Activated T-helper 1 cell treated with anti-CD3 and anti-CD28 coated beads, Interleukin-12 subunit alpha, Interleukin-12 subunit beta, Interleukin-2, Interleukin-4 antibody, amounts not matched to agents 30 ng/mL and 10 ng/mL and 1 ng/mL, durations not matched to agents 14 hours and 24 hours and 36 hours (primary cell): ENCODE measurements at regions of chr14 and their contacts with region 1.

Region 1: GRCh38 chr14:50116181-50116956 is at the start of gene VCPKMT:
- DNase-seq: peak; percentile 95
- H3K4me3 Mint-ChIP-seq: peak within 1 kb of the TSS; percentile 97
- H3K27ac Mint-ChIP-seq: peak within 1 kb of the TSS; percentile 98
- H3K4me1 Mint-ChIP-seq: peaks cover 33% of the 10 kb centered on the region
- H3K27me3 Mint-ChIP-seq: no peaks in the 10 kb centered on the region
- total RNA-seq, gene VCPKMT: 12.3 and 15.2 TPM in 2 replicates

Region 2: GRCh38 chr14:49598485-49599300 is 517.7 kb before region 1 on chr14 and contains the start of gene LRR1:
- intact Hi-C with region 1: loop called (anchors 5 kb)
- DNase-seq: peak; percentile 82
- H3K4me3 Mint-ChIP-seq: peak within 1 kb of the TSS; percentile 92
- H3K27ac Mint-ChIP-seq: peak within 1 kb of the TSS; percentile 95
- H3K4me1 Mint-ChIP-seq: peaks cover 44% of the 10 kb centered on the region
- H3K27me3 Mint-ChIP-seq: no peaks in the 10 kb centered on the region
- total RNA-seq, gene LRR1: 45.1 and 46.7 TPM in 2 replicates

Region 3: GRCh38 chr14:49692811-49693734 is 423.3 kb before region 1 on chr14 and contains the start of gene KLHDC1:
- intact Hi-C with region 1: loop called (anchors 5 kb)
- DNase-seq: peak; percentile 74
- H3K4me3 Mint-ChIP-seq: peak within 1 kb of the TSS; percentile 87
- H3K27ac Mint-ChIP-seq: peak within 1 kb of the TSS; percentile 94
- H3K4me1 Mint-ChIP-seq: peaks cover 19% of the 10 kb centered on the region
- H3K27me3 Mint-ChIP-seq: peaks cover 1% of the 10 kb centered on the region
- total RNA-seq, gene KLHDC1: 0.93 and 1.9 TPM in 2 replicates

Region 4: GRCh38 chr14:49786315-49787110 is 329.9 kb before region 1 on chr14:
- intact Hi-C with region 1: loop called (anchors 5 kb)
- DNase-seq: no peak
- H3K4me3 Mint-ChIP-seq: no peak overlapping the region
- H3K27ac Mint-ChIP-seq: no peak overlapping the region
- H3K4me1 Mint-ChIP-seq: no peaks in the 10 kb centered on the region
- H3K27me3 Mint-ChIP-seq: no peaks in the 10 kb centered on the region

Region 5: GRCh38 chr14:49862089-49862673 is 254.2 kb before region 1 on chr14:
- intact Hi-C with region 1: loop called (anchors 1 kb)
- DNase-seq: peak; percentile 81
- H3K4me3 Mint-ChIP-seq: no peak overlapping the region
- H3K27ac Mint-ChIP-seq: no peak overlapping the region
- H3K4me1 Mint-ChIP-seq: peaks cover 10% of the 10 kb centered on the region
- H3K27me3 Mint-ChIP-seq: peaks cover 6% of the 10 kb centered on the region

Region 6: GRCh38 chr14:50260511-50260910 is 144.1 kb after region 1 on chr14:
- intact Hi-C with region 1: loop called (anchors 5 kb)
- DNase-seq: peak; percentile 11
- H3K4me3 Mint-ChIP-seq: no peak overlapping the region
- H3K27ac Mint-ChIP-seq: no peak overlapping the region
- H3K4me1 Mint-ChIP-seq: peaks cover 4% of the 10 kb centered on the region
- H3K27me3 Mint-ChIP-seq: no peaks in the 10 kb centered on the region